ENCODE measurements at regions of chr6 and their contacts with region 1.

Region 1: DNA sequence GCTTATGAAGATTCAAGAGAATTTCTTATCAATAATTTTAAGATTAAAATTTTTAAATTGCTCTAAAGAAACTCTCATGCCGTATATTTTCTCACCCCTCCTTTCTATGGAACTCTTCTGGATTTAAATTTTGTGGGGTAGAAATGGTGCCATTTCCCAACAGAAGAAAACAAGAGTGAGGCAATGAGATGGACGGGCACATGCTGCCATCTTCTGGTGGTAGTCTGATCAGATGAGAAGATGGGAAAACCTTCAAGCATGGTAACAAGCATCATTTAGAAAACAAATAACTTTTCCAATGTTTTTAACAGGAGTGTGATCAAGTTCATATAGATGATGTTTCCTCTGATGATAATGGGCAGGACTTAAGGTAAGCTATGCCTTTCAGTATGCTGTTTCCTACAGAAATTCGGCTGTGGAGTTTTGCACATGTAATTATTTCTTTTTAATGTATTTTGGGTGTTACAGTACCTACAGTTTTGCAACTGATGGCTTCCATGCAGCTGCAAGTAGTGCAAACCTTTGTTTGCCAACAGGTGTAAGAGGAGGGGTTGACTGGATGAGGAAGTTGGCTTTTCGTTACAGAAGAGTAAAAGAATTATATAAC is 271.4 kb downstream of the EYA4 start:
- DNase-seq: peak; percentile 54
- ATAC-seq: no peak

Region 2: DNA sequence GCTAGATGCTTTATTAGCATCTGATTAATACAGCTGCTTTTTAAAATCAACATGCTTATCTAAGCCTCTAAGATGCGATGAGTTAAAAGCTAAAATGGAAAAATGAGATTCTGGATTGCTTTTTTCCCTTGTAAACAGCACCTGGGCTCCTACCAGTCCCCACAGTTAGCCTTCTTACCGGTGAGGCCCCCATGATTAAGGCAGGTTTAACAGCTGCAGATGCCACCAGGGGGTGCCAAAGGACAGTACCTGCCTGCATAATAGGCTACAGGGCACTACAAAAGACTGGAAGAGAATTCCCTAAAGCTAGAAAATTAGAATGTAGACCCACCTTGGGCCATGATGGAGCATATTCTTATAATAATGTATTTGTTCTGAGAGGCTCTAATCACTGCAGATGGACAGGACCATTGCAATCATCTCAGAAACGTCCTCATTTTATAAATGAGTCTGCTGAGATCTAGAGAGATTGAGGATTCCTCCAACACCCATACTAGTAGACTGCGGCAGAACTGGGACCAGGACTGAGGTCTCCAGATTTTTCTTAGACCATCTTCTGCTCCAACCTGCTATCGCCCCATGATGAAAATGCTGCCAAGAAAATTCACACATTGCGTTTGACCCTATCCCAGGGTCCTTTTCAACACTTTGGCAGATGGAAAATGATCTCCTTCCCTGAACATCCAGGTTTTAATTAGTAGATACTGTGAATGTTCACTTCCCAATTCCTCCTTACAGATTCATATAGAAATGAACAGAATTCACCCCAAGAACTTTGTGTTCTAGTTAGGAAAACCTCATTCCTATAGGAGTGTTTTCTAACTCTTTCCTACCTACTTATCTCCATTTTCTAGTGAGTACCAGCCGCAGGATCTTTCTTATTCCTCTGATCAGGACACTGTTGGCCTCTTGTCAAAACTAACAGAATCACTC is 549.3 kb before region 1 on chr6:
- intact Hi-C with region 1: loop called (anchors 5 kb)
- DNase-seq: peak; percentile 75
- ATAC-seq: peak; percentile 90

Region 3: DNA sequence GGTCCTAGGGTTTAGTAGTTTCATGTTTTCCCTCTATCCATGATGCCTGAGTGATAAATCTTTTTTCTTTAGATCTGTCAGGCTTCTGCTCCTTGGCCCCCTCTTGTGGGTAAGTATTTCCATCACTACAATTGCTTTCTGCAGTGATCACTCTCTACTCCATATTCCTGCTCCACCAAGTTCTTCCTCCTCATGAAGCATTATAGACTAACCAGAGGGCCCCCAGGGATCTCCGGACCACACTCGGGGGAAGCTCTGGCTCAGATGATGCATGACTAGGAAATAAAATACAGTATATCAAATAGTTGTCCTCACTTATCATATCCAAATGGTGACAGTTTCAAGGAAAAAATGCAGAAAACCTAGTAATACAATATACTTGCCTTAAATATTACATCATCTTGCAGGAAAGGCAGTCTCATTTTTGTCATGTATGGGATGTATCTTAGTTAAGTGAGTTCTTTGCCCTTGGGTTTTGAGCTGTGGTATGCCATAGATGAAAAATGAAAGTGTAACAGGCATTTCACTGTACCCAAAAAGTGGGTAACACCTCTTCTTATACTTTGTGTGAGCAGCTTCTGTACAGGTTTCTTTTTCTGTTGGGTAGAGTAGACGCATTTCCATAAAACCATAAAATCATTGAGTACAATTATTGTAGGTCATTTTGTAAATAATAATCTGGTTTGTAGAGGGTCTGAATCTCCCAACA is 472.3 kb before region 1 on chr6:
- intact Hi-C with region 1: loop called (anchors 5 kb)
- DNase-seq: no peak
- ATAC-seq: peak; percentile 42

Region 4: DNA sequence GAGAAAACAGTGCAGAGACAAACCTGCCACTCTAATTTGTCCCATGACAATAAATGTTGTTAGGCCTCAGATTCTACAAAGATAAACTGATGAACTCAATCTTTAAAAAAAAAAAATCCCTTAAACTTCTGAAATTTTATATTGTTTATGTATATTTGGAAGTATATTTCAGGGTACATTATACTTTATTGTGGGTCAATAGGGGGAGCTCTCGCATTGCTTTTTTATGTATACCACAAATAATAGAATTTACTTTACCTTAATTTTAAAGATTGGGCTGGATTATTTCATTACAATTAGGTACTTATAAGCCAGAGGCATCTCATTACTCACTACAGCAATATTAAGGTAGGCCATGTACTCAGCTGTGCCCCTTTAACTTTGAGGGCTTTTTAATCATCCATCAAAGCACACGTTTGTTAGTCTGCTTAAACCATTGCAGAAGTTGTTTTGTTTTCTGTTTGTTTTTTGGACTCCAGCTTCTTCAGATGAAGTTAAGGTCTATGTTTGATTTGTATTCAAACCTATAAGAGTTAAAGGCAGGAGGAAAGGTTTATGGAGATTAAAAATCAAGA is 327.6 kb before region 1 on chr6:
- intact Hi-C with region 1: loop called (anchors 10 kb)
- DNase-seq: no peak
- ATAC-seq: peak; percentile 39

Measured in Right ventricle myocardium superior (tissue), 1 donor.